Cardiac septum (tissue), 1 donor: ENCODE measurements at regions of chr3 and their contacts with region 1.

Region 1: DNA sequence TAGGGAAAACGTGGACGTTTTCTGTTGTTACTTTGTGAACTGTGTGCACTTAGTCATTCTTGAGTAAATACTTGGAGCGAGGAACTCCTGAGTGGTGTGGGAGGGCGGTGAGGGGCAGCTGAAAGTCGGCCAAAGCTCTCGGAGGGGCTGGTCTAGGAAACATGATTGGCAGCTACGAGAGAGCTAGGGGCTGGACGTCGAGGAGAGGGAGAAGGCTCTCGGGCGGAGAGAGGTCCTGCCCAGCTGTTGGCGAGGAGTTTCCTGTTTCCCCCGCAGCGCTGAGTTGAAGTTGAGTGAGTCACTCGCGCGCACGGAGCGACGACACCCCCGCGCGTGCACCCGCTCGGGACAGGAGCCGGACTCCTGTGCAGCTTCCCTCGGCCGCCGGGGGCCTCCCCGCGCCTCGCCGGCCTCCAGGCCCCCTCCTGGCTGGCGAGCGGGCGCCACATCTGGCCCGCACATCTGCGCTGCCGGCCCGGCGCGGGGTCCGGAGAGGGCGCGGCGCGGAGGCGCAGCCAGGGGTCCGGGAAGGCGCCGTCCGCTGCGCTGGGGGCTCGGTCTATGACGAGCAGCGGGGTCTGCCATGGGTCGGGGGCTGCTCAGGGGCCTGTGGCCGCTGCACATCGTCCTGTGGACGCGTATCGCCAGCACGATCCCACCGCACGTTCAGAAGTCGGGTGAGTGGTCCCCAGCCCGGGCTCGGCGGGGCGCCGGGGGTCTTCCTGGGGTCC is at the start of gene TGFBR2:
- DNase-seq: peak; percentile 98
- total RNA-seq, gene TGFBR2: 66.7 TPM

Region 2: GRCh38 chr3:30059240-30059639 is 547.2 kb before region 1 on chr3:
- intact Hi-C with region 1: no loop called
- DNase-seq: no peak

Region 3: GRCh38 chr3:30286007-30286669 is 320.3 kb before region 1 on chr3:
- intact Hi-C with region 1: loop called (anchors 5 kb)
- DNase-seq: peak; percentile 78

Region 4: DNA sequence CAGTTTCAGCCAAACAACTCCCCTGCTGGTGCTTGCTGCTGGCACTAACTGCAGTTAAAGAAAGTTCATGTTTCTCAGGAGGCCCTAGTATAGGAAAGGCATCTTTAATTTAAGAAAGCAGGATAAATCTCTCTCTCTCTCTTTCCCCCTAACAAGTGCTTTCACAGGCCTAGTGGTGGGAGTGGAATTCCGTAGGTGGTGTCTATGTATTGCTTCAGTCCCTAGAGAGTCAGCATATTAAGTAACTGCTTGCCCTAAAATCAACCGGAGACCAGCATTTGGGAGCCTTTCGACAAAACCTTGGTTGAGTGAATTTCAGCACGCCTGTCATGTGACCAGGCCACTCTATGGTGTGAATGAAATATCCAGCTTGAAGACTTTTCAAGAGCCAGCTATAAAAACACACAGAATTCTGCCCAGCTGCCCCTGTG is 169.3 kb before region 1 on chr3:
- intact Hi-C with region 1: loop called (anchors 5 kb)
- DNase-seq: no peak

Region 5: DNA sequence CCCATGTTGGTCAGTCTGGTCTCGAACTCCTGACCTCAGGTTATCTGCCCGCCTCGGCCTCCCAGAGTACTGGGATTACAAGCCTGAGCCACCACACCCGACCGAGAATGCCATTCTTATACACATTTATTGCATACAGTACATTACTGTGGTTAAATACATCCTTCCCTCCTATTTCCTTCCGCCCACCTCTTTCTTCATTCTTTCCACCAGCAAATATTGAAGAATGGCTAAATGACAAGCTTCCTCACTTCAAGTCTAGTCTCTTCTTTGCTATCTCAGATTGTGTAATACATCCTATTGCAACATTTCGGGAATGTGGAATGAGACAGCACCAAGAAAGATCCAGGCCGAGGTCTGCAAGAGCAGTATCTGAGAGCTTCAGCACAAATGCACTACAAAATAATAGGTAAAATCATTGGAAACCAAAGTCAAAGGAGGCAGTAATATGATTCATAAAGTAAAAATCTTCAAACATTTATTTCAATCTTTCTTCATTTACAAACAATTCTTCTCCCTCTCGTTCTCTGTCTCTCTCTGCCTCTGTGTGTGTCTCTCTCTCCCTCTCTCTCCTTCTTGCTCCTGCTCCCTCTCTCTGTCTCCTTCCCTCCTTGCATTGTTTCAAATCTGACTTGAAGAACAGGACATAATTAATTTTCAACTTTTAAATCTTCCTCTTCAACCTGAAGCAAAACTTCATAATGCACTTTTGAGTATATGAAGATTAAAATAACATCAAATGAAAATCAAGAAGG is 94.8 kb before region 1 on chr3:
- intact Hi-C with region 1: no loop called
- DNase-seq: no peak

Region 6: GRCh38 chr3:30548600-30548999 is 57.9 kb before region 1 on chr3:
- intact Hi-C with region 1: loop called (anchors 2 kb)
- DNase-seq: no peak

Region 7: GRCh38 chr3:30693470-30694120 is 87.1 kb after region 1 on chr3:
- intact Hi-C with region 1: loop called (anchors 5 kb)
- DNase-seq: no peak

Region 8: DNA sequence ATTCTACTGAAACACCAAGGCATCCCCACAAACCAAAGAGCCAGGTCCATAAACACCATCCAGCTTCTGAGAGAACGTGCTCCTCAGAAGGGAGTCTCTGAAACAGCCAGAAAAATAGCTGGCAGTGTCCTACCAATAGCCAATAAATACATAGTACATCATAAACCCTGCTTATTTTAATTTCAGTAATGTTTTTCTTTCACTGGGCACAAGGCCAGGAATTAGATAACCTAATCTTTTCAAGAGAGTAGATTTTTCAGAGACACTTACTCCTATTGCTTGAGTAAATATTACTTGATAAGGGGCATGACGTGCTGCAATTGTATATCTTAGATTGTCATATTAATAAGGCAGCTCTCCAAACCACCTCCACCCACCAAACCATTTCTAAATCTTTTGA is 265.3 kb after region 1 on chr3:
- intact Hi-C with region 1: no loop called
- DNase-seq: no peak